Thyroid gland (tissue), 4 donors: ENCODE measurements at regions of chr1 and their contacts with region 1.

Region 1: GRCh38 chr1:207644852-207645634 is at the start of gene CR1L:
- DNase-seq: peak; percentile 87
- H3K4me3 ChIP-seq: peak within 1 kb of the TSS; percentile 7 to 43 (median 8)
- H3K27ac ChIP-seq: no peak within 1 kb of the TSS
- H3K4me1 ChIP-seq: peaks cover 0 to 5% of the 10 kb centered on the region in 2 donors
- H3K27me3 ChIP-seq: no peaks in the 10 kb centered on the region
- CTCF ChIP-seq: no peak
- POLR2A ChIP-seq: no peak
- total RNA-seq, gene CR1L: 0.22 TPM in 1 of 4 donors, not detected in the others

Region 2: GRCh38 chr1:207805841-207806421 is 160.9 kb after region 1 on chr1:
- intact Hi-C with region 1: loop called (anchors 10 kb)
- DNase-seq: peak; percentile 61 to 70
- H3K4me3 ChIP-seq: no peak overlapping the region
- H3K27ac ChIP-seq: peak overlapping the region; percentile 38 to 82 (median 78)
- H3K4me1 ChIP-seq: peaks cover 21 to 77% of the 10 kb centered on the region in 2 donors
- H3K27me3 ChIP-seq: no peaks in the 10 kb centered on the region
- CTCF ChIP-seq: no peak
- POLR2A ChIP-seq: no peak